Activated CD8-positive, alpha-beta T cell treated with anti-CD3 and anti-CD28 coated beads for 36 hours (primary cell): ENCODE measurements at regions of chr7 and their contacts with region 1.

Region 1: GRCh38 chr7:43721193-43721806 is 8.0 kb downstream of the COA1 start:
- DNase-seq: no peak
- ATAC-seq: no peak
- H3K4me3 Mint-ChIP-seq: no peak overlapping the region
- H3K27ac Mint-ChIP-seq: no peak overlapping the region
- H3K4me1 Mint-ChIP-seq: peaks cover 52% of the 10 kb centered on the region
- H3K27me3 Mint-ChIP-seq: no peaks in the 10 kb centered on the region
- CTCF ChIP-seq: peak; percentile 80

Region 2: GRCh38 chr7:43511029-43511428 is 210.3 kb before region 1 on chr7:
- CTCF ChIA-PET with region 1: no interaction called
- POLR2A ChIA-PET with region 1: no interaction called
- intact Hi-C with region 1: no loop called
- DNase-seq: no peak
- ATAC-seq: no peak
- H3K4me3 Mint-ChIP-seq: no peak overlapping the region
- H3K27ac Mint-ChIP-seq: no peak overlapping the region
- H3K4me1 Mint-ChIP-seq: peaks cover 5% of the 10 kb centered on the region
- H3K27me3 Mint-ChIP-seq: peaks cover 8% of the 10 kb centered on the region
- CTCF ChIP-seq: no peak

Region 3: GRCh38 chr7:43572516-43573049 is 148.7 kb before region 1 on chr7:
- CTCF ChIA-PET with region 1: interaction called, 10 read pairs
- POLR2A ChIA-PET with region 1: no interaction called
- intact Hi-C with region 1: no loop called
- DNase-seq: peak; percentile 66
- ATAC-seq: peak; percentile 83
- H3K4me3 Mint-ChIP-seq: no peak overlapping the region
- H3K27ac Mint-ChIP-seq: no peak overlapping the region
- H3K4me1 Mint-ChIP-seq: peaks cover 33% of the 10 kb centered on the region
- H3K27me3 Mint-ChIP-seq: peaks cover 1% of the 10 kb centered on the region
- CTCF ChIP-seq: no peak